Activated CD4-positive, alpha-beta memory T cell treated with anti-CD3 and anti-CD28 coated beads for 36 hours (primary cell): ENCODE measurements at regions of chr20 and their contacts with region 1.

Region 1: GRCh38 chr20:36050436-36051317 is 82.3 kb downstream of the CNBD2 start:
- DNase-seq: peak; percentile 95
- H3K4me3 Mint-ChIP-seq: peak overlapping the region; percentile 94
- H3K27ac Mint-ChIP-seq: peak overlapping the region; percentile 94
- H3K4me1 Mint-ChIP-seq: peaks cover 32% of the 10 kb centered on the region
- H3K27me3 Mint-ChIP-seq: peaks cover 6% of the 10 kb centered on the region

Region 2: GRCh38 chr20:36035745-36036144 is 14.9 kb before region 1 on chr20:
- CTCF ChIA-PET with region 1: no interaction called
- POLR2A ChIA-PET with region 1: no interaction called
- intact Hi-C with region 1: no loop called
- DNase-seq: no peak
- H3K4me3 Mint-ChIP-seq: no peak overlapping the region
- H3K27ac Mint-ChIP-seq: no peak overlapping the region
- H3K4me1 Mint-ChIP-seq: no peaks in the 10 kb centered on the region
- H3K27me3 Mint-ChIP-seq: no peaks in the 10 kb centered on the region

Region 3: DNA sequence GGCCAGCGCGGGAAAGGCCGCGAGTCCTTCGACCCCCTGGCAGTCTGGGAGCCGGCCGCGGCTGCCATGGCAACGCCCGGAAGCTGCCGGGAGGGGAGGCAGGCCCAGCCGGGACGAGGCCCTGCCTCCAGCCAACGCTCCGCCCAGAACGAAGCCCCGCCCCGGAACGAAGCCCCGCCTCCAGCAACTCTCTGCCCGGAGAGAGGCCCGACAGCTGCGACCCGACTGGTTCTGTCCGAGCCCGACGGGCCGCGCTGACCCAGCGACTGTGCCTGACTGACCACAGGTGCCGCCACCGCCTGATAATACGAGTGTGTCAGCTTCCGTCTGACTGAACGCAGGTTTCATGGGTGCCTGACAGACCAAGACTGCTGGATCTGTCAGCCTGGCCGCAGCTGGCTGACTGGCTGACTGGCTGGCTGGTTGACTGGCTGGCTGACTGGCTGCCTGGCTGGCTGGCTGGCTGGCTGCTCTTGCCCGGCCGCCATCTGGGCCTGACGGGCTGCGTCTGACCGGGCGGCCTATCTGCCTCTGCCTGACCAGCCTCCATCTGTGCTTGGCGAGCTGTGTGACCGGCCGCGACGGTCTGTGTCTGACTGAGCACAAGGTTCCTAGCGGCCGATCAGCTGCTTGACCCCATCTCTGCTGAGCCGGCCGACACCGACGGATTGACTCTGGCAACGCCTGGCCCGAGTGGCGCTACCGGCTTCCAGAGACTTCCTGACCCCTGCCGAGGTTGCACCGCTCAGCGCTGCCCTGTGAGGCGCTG is 14.2 kb after region 1 on chr20:
- CTCF ChIA-PET with region 1: no interaction called
- POLR2A ChIA-PET with region 1: interaction called, 3 read pairs
- intact Hi-C with region 1: loop called (anchors 1 kb)
- DNase-seq: peak; percentile 95
- H3K4me3 Mint-ChIP-seq: peak overlapping the region; percentile 84
- H3K27ac Mint-ChIP-seq: no peak overlapping the region
- H3K4me1 Mint-ChIP-seq: no peaks in the 10 kb centered on the region
- H3K27me3 Mint-ChIP-seq: peaks cover 1% of the 10 kb centered on the region